Activated naive CD4-positive, alpha-beta T cell treated with anti-CD3 and anti-CD28 coated beads, Interleukin-2, amount 10 ng/mL, durations not matched to agents 7 days and 5 days (primary cell): ENCODE measurements at regions of chr17 and their contacts with region 1.

Region 1: DNA sequence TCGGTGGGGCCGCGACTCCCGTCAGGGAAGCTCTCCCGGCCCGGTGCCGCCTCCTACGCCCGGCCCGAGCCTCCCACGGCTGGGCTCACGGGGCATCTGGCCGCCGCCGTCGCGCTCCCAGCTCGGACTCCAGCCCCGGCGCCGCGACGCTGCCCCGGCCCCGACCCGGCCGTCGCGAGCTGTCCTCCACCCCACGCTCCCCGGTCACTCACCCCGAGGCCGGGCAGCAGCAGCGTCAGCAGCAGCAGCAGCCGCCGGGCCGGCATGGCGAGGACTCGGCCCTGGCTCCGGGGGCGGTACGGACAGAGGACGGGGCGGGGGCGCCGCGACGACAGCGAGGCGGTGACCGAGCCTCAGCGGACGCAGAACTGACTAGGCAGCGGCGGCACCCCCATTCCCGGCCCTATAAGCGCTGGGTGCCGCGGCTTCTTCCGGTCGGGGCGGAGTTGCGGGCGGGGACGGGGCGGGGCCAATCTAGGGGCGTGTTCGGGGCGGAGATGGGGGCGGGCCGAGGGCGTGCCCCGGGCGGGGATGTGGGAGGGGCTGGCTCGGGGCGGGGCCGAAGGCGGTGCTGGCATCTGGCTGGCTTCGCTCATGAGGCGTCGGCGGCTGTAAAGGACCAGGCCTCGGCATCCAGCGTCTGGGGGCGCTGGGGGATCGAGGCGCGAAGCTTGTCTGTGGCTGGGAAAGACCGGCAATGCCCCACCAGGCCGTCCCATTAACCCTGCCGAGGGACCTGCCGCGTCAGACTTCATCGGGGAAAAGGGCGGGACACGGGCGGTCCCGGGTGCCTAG is at the start of gene ERN1:
- DNase-seq: peak; percentile 93
- H3K4me3 Mint-ChIP-seq: peak within 1 kb of the TSS; percentile 97
- H3K27ac Mint-ChIP-seq: peak within 1 kb of the TSS; percentile 89
- H3K4me1 Mint-ChIP-seq: peaks cover 56% of the 10 kb centered on the region
- H3K27me3 Mint-ChIP-seq: peaks cover 1% of the 10 kb centered on the region

Region 2: DNA sequence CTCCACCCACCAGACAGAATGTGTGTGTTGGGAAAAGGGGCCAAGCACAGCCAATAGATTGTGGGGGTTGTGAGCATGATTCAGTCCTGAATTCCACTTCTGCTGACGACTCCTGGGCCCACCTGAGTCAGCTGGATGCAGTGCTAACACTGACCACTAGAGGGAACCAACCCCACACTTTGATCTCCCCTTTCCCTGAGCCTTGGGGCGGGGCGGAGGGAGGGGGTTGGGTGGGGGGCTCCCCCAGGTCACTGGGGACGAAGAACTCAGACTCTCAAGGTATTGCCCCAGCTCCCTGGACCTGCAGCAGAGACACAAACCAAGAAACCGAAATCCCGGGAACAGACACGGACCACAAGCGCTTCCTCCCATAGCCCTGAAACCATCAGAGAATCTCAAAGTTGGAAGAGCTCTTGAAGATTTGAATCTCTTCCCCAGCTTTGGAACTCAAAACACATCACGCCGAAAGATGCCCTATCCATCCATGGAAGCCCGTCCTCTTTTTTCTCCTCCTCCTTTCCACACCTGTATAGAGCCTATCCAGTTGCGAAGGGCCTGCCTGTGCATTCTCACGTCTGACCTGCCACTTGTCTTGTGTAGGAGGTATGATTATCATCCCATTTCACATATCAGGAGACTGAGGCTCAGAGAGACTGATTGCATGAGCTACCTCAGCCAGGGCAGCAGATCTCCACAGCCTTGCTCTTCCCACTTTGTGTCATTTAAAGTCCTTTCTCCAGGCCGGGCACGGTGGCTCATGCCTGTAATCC is 218.1 kb before region 1 on chr17:
- CTCF ChIA-PET with region 1: interaction called, 29 read pairs
- DNase-seq: peak; percentile 77
- H3K4me3 Mint-ChIP-seq: no peak overlapping the region
- H3K27ac Mint-ChIP-seq: no peak overlapping the region
- H3K4me1 Mint-ChIP-seq: peaks cover 2% of the 10 kb centered on the region
- H3K27me3 Mint-ChIP-seq: peaks cover 63% of the 10 kb centered on the region

Region 3: GRCh38 chr17:63946440-63947367 is 183.3 kb before region 1 on chr17:
- CTCF ChIA-PET with region 1: interaction called, 20 read pairs
- DNase-seq: peak; percentile 72
- H3K4me3 Mint-ChIP-seq: peak overlapping the region; percentile 54
- H3K27ac Mint-ChIP-seq: peak overlapping the region; percentile 85
- H3K4me1 Mint-ChIP-seq: peaks cover 23% of the 10 kb centered on the region
- H3K27me3 Mint-ChIP-seq: peaks cover 81% of the 10 kb centered on the region

Region 4: GRCh38 chr17:63998050-63998720 is 131.8 kb before region 1 on chr17 and contains the start of gene PRR29:
- CTCF ChIA-PET with region 1: interaction called, 11 read pairs
- DNase-seq: peak; percentile 86
- H3K4me3 Mint-ChIP-seq: peak within 1 kb of the TSS; percentile 90
- H3K27ac Mint-ChIP-seq: peak within 1 kb of the TSS; percentile 71
- H3K4me1 Mint-ChIP-seq: peaks cover 58% of the 10 kb centered on the region
- H3K27me3 Mint-ChIP-seq: peaks cover 50% of the 10 kb centered on the region

Region 5: GRCh38 chr17:64051153-64051552 is 78.8 kb before region 1 on chr17:
- CTCF ChIA-PET with region 1: interaction called, 25 read pairs
- DNase-seq: peak; percentile 36
- H3K4me3 Mint-ChIP-seq: no peak overlapping the region
- H3K27ac Mint-ChIP-seq: peak overlapping the region; percentile 97
- H3K4me1 Mint-ChIP-seq: peaks cover 56% of the 10 kb centered on the region
- H3K27me3 Mint-ChIP-seq: no peaks in the 10 kb centered on the region

Region 6: DNA sequence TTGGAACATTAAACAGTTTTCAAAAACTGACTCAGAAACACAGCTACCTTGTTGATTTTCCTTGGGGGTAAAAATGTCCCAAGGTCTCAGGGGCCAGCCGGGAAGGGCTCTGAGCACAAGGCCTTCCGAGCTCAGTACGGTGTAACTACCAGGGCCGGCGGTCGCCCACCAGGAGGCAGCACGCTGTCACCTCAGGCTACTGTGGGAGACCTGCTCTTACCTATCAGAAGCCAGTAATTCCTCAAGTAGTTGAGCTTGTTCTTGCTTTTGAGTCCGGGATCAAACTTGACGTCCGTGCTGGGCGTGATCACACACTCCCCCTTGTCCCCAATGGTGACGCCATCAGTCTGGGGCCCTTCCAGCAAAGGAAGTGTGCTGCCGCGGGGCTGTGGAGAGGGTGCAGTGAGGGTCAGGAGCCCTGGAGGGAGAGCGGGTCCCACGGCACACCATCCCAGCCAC is 66.2 kb before region 1 on chr17:
- CTCF ChIA-PET with region 1: interaction called, 214 read pairs
- DNase-seq: peak; percentile 76
- H3K4me3 Mint-ChIP-seq: no peak overlapping the region
- H3K27ac Mint-ChIP-seq: peak overlapping the region; percentile 29
- H3K4me1 Mint-ChIP-seq: peaks cover 79% of the 10 kb centered on the region
- H3K27me3 Mint-ChIP-seq: no peaks in the 10 kb centered on the region

Region 7: DNA sequence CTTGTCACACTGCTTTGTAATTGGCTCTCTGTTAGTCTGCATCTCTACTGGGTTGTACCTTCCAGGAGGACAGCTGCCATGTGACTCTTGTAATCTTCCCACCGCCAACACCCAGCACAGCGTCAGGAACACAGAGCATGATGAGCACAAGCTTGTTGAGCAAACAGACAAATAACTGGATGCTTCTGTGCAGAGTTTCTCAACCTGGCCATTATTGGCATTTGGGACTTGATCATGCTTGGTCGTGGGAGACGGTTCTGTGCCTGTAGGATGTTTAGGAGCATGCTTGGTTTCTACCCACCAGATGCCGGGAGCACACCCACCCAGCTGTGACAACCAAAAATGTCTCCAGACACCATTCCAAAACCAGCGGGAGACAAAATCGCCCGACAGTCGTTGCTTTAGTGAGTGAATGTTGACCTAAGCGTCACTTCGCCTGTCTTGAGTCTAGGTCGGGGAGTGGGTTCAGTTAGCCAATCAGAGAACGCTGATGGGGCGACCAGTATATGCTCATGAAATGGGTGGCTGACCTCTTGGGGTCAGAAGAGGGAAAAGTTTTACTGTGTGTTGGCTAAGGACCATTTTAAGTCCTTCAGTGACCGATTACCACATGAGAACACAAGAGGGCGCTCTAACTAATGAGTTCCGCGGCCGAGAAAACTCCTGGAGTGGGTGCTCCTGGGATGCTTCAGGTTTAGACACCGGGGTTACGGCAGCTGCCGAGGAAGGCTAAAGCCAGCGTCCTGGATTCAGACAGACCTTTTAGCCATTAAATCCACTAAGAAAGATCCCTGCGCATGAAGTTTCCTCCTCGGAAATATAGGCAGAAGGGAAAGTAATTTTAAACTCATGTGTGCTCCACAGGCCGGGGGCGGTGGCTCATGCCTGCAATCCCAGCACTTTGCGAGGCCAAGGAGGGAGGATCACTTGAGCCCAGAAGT is 190.9 kb after region 1 on chr17:
- CTCF ChIA-PET with region 1: no interaction called
- DNase-seq: peak; percentile 69
- H3K4me3 Mint-ChIP-seq: no peak overlapping the region
- H3K27ac Mint-ChIP-seq: no peak overlapping the region
- H3K4me1 Mint-ChIP-seq: peaks cover 5% of the 10 kb centered on the region
- H3K27me3 Mint-ChIP-seq: peaks cover 34% of the 10 kb centered on the region